OCI-LY7 (cell line): ENCODE measurements at regions of chr1 and their contacts with region 1.

Region 1: GRCh38 chr1:228165372-228166169 is at the start of gene IBA57:
- DNase-seq: peak; percentile 99
- H3K4me3 ChIP-seq: peak within 1 kb of the TSS; percentile 86
- H3K27ac ChIP-seq: peak within 1 kb of the TSS; percentile 83
- H3K4me1 ChIP-seq: peaks cover 25% of the 10 kb centered on the region
- CTCF ChIP-seq: peak; percentile 74
- total RNA-seq, gene IBA57: 3.2 and 9.9 TPM in 2 replicates

Region 2: GRCh38 chr1:227787513-227788270 is 377.9 kb before region 1 on chr1:
- CTCF ChIA-PET with region 1: no interaction called
- POLR2A ChIA-PET with region 1: no interaction called
- intact Hi-C with region 1: loop called (anchors 5 kb)
- DNase-seq: peak; percentile 92
- H3K4me3 ChIP-seq: peak overlapping the region; percentile 58
- H3K27ac ChIP-seq: no peak overlapping the region
- H3K4me1 ChIP-seq: peaks cover 6% of the 10 kb centered on the region
- CTCF ChIP-seq: no peak

Region 3: GRCh38 chr1:227999056-227999930 is 166.3 kb before region 1 on chr1:
- CTCF ChIA-PET with region 1: no interaction called
- POLR2A ChIA-PET with region 1: no interaction called
- intact Hi-C with region 1: loop called (anchors 1 kb)
- DNase-seq: peak; percentile 76
- H3K4me3 ChIP-seq: no peak overlapping the region
- H3K27ac ChIP-seq: no peak overlapping the region
- H3K4me1 ChIP-seq: no peaks in the 10 kb centered on the region
- CTCF ChIP-seq: peak; percentile 91

Region 4: GRCh38 chr1:228082135-228082891 is 83.3 kb before region 1 on chr1 and contains the start of gene ARF1:
- CTCF ChIA-PET with region 1: no interaction called
- POLR2A ChIA-PET with region 1: interaction called, 9 read pairs
- intact Hi-C with region 1: loop called (anchors 5 kb)
- DNase-seq: peak; percentile 97
- H3K4me3 ChIP-seq: peak within 1 kb of the TSS; percentile 84
- H3K27ac ChIP-seq: peak within 1 kb of the TSS; percentile 62
- H3K4me1 ChIP-seq: peaks cover 29% of the 10 kb centered on the region
- CTCF ChIP-seq: no peak
- total RNA-seq, gene ARF1: 125 and 163 TPM in 2 replicates

Region 5: GRCh38 chr1:228131766-228132165 is 33.8 kb before region 1 on chr1:
- CTCF ChIA-PET with region 1: interaction called, 8 read pairs
- POLR2A ChIA-PET with region 1: interaction called, 19 read pairs
- intact Hi-C with region 1: loop called (anchors 1 kb)
- DNase-seq: no peak
- H3K4me3 ChIP-seq: no peak overlapping the region
- H3K27ac ChIP-seq: no peak overlapping the region
- H3K4me1 ChIP-seq: peaks cover 12% of the 10 kb centered on the region
- CTCF ChIP-seq: no peak

Region 6: DNA sequence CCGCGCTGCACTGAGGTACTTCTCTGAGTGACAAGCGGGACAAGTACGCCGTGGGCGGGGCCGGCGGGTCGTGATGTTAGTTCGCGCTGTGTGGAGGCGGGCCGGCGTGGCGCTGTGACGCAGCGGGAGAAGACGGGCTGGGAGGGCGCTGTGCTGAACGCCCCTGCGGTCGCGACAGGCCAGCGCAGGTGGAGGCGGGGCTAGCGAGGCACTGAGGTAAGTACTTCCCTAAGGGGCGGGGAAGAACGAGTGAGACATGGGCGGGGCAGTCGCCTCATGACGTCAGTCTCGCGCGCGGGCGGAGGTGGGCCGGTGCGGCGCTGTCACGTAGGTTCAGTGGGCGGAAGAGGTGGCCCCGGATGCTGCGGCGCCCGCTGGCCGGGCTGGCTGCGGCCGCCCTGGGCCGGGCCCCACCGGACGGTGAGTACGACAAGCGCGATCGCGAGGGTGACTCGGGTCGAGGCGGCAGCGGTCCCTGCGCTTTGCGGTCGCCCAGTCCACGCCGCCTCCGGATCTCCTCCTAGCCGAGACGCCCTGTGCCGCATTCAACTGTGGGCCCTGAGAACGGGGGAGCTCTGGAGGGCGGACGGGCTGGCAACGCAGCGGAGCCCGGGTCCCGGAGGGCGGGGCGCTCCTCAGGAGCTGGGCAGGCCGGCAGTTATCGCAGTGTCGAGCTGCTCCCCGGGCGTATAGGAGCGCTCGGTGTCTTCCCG is 25.5 kb before region 1 on chr1 and contains the start of gene GUK1:
- CTCF ChIA-PET with region 1: interaction called, 3 read pairs
- POLR2A ChIA-PET with region 1: interaction called, 19 read pairs
- intact Hi-C with region 1: loop called (anchors 1 kb)
- DNase-seq: peak; percentile 100
- H3K4me3 ChIP-seq: peak within 1 kb of the TSS; percentile 92
- H3K27ac ChIP-seq: peak within 1 kb of the TSS; percentile 79
- H3K4me1 ChIP-seq: peaks cover 77% of the 10 kb centered on the region
- CTCF ChIP-seq: 0 out of 2 replicates have a peak, but pooled peaks have one; percentile 20
- total RNA-seq, gene GUK1: 197 and 201 TPM in 2 replicates

Region 7: DNA sequence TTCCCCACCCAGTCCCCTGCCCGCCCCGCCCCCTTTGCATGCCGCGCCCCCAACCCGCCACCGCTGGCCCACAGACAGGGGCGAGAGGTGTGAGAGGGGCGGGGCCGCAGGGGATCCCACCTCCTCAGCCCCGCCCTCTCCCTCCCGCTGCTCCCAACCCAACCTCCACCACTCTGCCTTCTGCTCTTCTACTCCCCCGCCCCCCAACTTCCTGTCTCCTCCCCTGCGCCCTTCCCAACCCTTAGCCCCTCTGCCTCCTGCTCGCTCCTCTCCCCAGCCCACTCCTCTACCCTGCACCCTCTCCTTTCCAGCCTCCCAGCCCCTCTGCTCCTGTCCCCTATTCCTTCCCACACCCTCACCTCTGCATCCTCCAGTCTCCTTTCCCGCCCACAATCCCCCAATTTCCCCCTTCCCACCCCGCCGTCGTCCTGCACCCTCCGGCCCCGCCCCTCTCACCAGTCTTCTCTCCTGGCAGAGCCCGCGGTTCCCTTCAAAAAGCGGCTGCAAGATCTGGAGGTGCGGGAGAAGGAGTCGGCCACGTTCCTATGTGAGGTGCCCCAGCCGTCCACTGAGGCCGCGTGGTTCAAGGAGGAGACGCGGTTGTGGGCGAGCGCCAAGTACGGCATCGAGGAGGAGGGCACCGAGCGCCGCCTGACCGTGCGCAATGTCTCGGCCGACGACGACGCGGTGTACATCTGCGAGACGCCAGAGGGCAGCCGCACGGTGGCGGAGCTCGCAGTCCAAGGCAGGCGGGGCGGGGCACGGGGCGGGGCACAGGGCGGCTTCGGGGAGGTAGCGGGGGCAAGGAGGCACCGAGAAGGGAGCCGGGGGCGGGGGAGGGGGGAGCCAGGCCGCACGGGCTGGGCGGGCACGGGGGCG is 47.6 kb after region 1 on chr1:
- CTCF ChIA-PET with region 1: no interaction called
- POLR2A ChIA-PET with region 1: interaction called, 3 read pairs
- intact Hi-C with region 1: loop called (anchors 2 kb)
- DNase-seq: peak; percentile 91
- H3K4me3 ChIP-seq: peak overlapping the region; percentile 65
- H3K27ac ChIP-seq: peak overlapping the region; percentile 52
- H3K4me1 ChIP-seq: peaks cover 4% of the 10 kb centered on the region
- CTCF ChIP-seq: peak; percentile 66

Region 8: DNA sequence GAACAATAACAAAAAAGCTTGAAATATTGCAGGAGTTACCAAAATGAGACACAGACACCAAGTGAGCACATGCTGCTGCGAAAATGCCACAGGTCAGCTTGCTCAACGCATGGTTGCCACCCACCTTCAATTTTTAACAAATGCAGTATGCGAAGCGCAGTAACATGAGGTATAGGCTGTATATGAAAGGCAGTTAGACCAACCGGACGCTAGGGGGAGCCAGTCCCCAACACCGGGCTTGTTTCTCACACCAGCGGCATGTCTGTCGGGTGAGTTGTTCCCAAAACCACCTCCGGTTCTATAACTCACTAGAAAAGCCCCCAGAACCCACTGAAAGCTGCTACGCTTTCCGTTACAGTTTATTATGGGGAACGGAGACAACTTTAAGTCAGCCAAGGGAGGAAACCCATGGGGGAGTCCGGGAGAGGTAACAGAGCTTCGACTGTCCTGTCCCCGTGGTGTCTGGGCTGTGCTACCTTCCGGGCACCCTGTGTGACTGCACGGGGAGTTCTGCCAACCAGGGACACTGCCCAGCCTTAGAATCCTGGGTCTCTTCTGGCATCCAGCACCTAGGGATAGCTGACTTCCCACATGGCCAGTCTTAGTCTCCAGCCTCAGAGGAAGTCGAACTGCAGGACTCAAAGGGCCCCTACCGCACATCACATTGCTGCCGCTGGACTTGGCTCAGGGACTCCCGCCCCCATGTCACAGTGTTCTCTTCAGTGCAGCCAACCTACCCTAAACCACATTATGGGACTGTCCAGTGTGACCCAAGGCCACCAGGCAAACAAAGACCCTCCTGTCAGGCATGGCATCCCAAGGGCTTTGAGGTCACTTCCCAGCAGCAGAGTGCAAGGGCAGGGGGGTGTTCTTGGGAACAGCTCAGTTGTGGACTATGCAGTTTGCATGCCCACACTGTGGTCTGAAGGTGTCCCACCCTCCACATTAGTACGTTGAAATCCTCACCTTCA is 335.6 kb after region 1 on chr1:
- CTCF ChIA-PET with region 1: no interaction called
- POLR2A ChIA-PET with region 1: no interaction called
- intact Hi-C with region 1: no loop called
- DNase-seq: peak; percentile 81
- H3K4me3 ChIP-seq: peak overlapping the region; percentile 50
- H3K27ac ChIP-seq: peak overlapping the region; percentile 37
- H3K4me1 ChIP-seq: peaks cover 18% of the 10 kb centered on the region
- CTCF ChIP-seq: peak; percentile 94